HAP-1 (cell line): ENCODE measurements at regions of chr12 and their contacts with region 1.

Region 1: GRCh38 chr12:105420659-105421240 is 90.3 kb downstream of the C12orf75 start:
- DNase-seq: peak; percentile 83 to 86
- H3K4me3 ChIP-seq: no peak overlapping the region
- H3K4me1 ChIP-seq: peaks cover 6% of the 10 kb centered on the region
- H3K27me3 ChIP-seq: no peaks in the 10 kb centered on the region

Region 2: DNA sequence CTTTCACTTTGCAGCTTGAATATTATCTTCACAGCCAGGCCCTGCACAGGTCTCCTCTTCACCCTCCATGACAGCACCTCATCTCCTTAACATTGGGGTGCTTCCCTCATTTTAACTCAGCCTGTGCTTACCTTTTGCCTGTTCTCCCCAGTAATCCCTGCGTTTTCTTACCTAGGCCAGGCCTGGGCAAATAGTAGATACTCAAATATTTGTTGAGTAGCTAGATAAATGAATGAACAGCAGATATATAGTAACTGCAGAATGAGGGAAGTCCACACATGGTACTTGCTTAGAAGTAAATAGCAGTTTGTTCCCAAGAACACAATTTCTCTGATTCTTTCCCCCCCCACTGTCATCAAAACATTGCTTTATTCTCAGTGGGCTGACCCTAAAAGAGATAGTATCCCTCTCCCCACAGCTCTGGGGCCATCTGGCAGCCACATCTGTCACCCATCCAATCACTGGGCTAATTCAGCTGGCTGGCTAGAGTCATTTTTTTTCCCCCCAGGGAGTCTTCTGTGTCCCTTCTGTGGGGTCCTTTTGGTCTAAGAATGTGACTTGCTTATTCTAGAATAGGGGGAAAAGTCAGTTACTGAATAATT is 228.0 kb before region 1 on chr12:
- in situ Hi-C with region 1: no loop called
- DNase-seq: no peak
- H3K4me3 ChIP-seq: no peak overlapping the region
- H3K4me1 ChIP-seq: no peaks in the 10 kb centered on the region
- H3K27me3 ChIP-seq: no peaks in the 10 kb centered on the region

Region 3: DNA sequence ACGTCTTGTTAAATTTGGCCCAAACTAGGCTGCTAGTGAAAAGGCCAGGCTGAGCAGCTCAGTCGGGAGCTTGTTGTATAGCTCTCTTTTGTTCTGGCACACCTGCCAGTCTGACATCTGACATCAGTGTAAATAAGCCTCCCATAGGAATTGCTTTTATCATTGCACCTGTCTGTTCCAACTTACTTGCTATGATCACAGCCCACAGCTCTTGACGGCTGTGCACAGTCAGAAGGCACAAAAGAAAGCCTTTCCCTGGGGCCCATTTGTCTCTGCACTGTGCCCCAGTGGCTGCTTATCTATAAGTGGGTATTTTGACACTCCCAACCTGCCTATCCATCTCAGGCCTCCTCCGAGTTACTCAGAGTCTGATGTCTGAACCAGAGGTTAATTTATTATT is 393.5 kb after region 1 on chr12:
- in situ Hi-C with region 1: no loop called
- DNase-seq: no peak
- H3K4me3 ChIP-seq: no peak overlapping the region
- H3K4me1 ChIP-seq: peaks cover under 1% of the 10 kb centered on the region; the same call in 1 of the 2 replicates
- H3K27me3 ChIP-seq: no peaks in the 10 kb centered on the region

Region 4: GRCh38 chr12:106136263-106136662 is 715.5 kb after region 1 on chr12:
- in situ Hi-C with region 1: loop called (anchors 5 kb)
- DNase-seq: peak; percentile 90 to 95
- H3K4me3 ChIP-seq: peak overlapping the region; percentile 70
- H3K4me1 ChIP-seq: peaks cover 37% of the 10 kb centered on the region
- H3K27me3 ChIP-seq: no peaks in the 10 kb centered on the region

Region 5: DNA sequence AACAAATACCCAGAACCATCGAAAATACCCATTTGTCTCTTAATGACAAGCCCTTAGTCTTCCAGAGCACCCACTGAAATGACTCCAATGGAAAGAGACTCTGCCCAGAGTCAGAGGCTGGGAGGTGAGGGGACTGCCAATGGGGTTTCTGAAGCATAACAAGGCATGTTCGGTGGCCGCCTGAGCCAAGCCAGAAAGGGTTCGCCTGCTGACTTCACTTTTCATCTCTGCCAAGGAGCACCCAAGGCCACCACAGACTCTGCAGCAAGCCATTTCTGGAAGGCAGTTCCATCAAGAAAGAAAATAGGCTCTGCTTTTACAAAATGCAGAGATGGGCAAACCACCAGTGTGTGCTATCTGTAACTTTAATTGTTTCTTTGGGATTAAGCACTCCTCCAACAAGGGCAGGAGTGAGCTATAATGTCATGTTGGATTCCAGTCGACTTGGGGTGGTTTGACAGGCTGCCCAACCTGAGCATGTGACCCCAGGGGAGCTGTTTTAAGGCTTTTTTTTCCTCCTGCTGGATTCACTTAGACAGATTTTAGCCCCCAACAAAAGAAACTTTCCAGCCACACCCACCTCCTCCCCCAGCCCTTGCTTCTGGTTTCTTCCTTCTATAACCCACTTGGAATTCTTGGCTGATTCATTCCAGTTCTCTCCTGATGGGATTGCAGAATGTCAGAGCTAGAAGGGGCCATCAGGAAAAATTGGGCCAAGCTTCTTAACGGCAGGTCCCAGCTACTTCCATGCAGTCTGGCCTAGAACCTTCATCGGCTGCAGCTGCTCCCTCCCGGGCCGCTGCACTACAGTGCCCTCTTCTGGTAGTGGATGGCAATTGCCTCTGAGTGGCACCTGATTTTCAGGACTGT is 803.0 kb after region 1 on chr12:
- in situ Hi-C with region 1: loop called (anchors 10 kb)
- DNase-seq: peak; percentile 61 to 83
- H3K4me3 ChIP-seq: no peak overlapping the region
- H3K4me1 ChIP-seq: peaks cover 5% of the 10 kb centered on the region
- H3K27me3 ChIP-seq: no peaks in the 10 kb centered on the region